ENCODE measurements at regions of chr19 and their contacts with region 1.

Region 1: GRCh38 chr19:44845612-44846454 is at the start of gene NECTIN2:
- DNase-seq: peak; percentile 100
- H3K4me3 Mint-ChIP-seq: peak within 1 kb of the TSS; percentile 66
- H3K27ac Mint-ChIP-seq: peak within 1 kb of the TSS; percentile 73
- H3K4me1 Mint-ChIP-seq: peaks cover 34% of the 10 kb centered on the region
- H3K27me3 Mint-ChIP-seq: no peaks in the 10 kb centered on the region
- CTCF ChIP-seq: peak; percentile 83
- total RNA-seq, gene NECTIN2: 137 and 174 TPM in 2 replicates

Region 2: DNA sequence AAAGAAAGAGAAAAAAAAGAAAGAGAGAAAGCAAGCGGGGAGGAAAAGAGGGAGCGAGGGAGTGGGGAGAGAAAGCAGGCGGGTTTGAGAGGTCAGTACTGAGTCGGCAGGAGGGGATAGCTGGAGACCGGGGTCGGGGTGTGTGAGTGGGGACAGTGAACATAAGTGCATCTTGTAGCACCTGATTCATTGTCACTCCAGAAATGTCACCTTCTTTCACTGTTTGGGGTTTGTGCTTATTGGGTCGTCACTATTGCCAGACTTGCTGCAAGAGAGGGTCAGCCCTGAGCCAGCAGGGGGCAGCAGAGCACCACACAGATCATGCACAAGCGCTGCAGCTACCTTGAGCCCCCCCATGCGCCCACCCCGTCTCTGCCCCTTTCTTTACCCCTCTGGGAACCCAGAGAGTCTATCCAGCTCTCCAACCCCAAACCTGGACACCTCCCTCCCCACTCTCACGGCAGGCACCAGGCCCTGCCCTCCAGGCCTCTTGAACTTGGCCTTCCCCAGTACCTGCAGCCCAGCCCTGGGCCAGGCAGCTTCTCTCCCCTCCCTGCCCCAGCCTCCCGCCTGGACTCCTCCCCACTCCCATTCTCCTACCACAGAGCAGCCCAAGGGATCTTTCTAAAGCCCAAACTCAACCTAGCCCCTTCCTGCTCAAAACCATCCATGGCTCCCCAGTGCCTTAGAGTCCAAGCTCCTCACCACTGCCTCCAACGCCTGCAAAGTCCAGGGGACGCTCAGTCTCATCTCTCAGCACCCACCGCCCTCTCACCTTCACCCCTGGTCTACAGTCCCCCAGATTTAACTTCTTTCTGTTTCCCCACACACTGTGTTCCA is 156.6 kb before region 1 on chr19:
- CTCF ChIA-PET with region 1: interaction called, 7 read pairs
- intact Hi-C with region 1: loop called (anchors 2 kb)
- DNase-seq: peak; percentile 91
- H3K4me3 Mint-ChIP-seq: no peak overlapping the region
- H3K27ac Mint-ChIP-seq: peak overlapping the region; percentile 14
- H3K4me1 Mint-ChIP-seq: peaks cover 62% of the 10 kb centered on the region
- H3K27me3 Mint-ChIP-seq: no peaks in the 10 kb centered on the region
- CTCF ChIP-seq: peak; percentile 99

Region 3: GRCh38 chr19:44762038-44762437 is 83.8 kb before region 1 on chr19:
- CTCF ChIA-PET with region 1: no interaction called
- intact Hi-C with region 1: no loop called
- DNase-seq: no peak
- H3K4me3 Mint-ChIP-seq: no peak overlapping the region
- H3K27ac Mint-ChIP-seq: no peak overlapping the region
- H3K4me1 Mint-ChIP-seq: peaks cover 16% of the 10 kb centered on the region
- H3K27me3 Mint-ChIP-seq: no peaks in the 10 kb centered on the region
- CTCF ChIP-seq: no peak

Region 4: GRCh38 chr19:44800461-44800860 is 45.4 kb before region 1 on chr19:
- CTCF ChIA-PET with region 1: interaction called, 10 read pairs
- intact Hi-C with region 1: loop called (anchors 1 kb)
- DNase-seq: peak; percentile 96
- H3K4me3 Mint-ChIP-seq: no peak overlapping the region
- H3K27ac Mint-ChIP-seq: no peak overlapping the region
- H3K4me1 Mint-ChIP-seq: peaks cover 9% of the 10 kb centered on the region
- H3K27me3 Mint-ChIP-seq: no peaks in the 10 kb centered on the region
- CTCF ChIP-seq: peak; percentile 99